Calu3 (cell line): ENCODE measurements at regions of chr12 and their contacts with region 1.

Region 1: DNA sequence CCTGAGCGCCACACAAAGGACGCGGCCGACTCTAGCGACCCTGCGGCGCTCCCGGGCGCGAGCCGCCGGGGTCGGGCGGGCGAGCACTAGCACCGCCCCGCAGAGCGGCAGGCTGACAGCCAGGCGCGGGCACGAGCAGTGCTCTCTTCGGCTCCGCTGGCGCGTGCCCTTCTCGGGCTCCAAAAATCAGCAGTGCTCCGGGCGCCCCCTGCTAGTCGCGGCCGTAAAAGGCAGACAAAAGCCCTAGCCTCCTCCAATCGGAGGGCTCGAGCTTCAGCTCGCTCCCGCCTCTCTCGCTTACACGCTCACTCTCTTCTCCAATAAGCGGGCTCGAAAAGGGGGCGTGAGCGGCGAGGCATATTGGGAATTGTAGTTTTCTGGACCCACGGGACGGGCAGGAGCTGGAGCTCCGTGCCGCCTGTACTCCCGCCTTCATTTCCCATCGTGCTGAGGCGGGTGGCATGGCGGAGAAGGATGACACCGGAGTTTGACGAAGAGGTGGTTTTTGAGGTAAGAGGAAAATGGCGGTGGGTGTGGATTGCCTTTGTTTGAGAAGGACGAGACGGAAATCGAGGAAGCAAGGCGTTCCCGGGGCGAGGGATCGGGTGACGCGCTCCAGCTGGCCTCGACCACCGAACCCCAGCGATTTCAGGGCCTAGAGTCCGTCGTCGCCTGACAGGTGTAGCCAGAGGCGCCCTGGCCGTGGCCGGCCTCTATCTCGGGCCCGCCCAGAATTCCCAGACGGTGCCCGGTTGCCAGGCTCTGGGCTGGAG is at the starts of genes FGD6 and VEZT:
- DNase-seq: peak; percentile 99
- H3K4me3 Mint-ChIP-seq: peak within 1 kb of the TSS; percentile 77
- H3K27ac Mint-ChIP-seq: peak within 1 kb of the TSS; percentile 88
- H3K4me1 Mint-ChIP-seq: peaks cover 8% of the 10 kb centered on the region
- H3K27me3 Mint-ChIP-seq: no peaks in the 10 kb centered on the region
- CTCF ChIP-seq: peak; percentile 63
- total RNA-seq, gene FGD6: 64.5 and 66.6 TPM in 2 replicates
- total RNA-seq, gene VEZT: 149 and 160 TPM in 2 replicates

Region 2: GRCh38 chr12:95169368-95169767 is 48.2 kb before region 1 on chr12:
- CTCF ChIA-PET with region 1: interaction called, 4 read pairs
- intact Hi-C with region 1: loop called (anchors 2 kb)
- DNase-seq: peak; percentile 80
- H3K4me3 Mint-ChIP-seq: peak overlapping the region; percentile 39
- H3K27ac Mint-ChIP-seq: peak overlapping the region; percentile 90
- H3K4me1 Mint-ChIP-seq: peaks cover 38% of the 10 kb centered on the region
- H3K27me3 Mint-ChIP-seq: no peaks in the 10 kb centered on the region
- CTCF ChIP-seq: no peak

Region 3: GRCh38 chr12:95204141-95204866 is 13.3 kb before region 1 on chr12:
- CTCF ChIA-PET with region 1: interaction called, 19 read pairs
- intact Hi-C with region 1: loop called (anchors 1 kb)
- DNase-seq: peak; percentile 94
- H3K4me3 Mint-ChIP-seq: peak overlapping the region; percentile 70
- H3K27ac Mint-ChIP-seq: peak overlapping the region; percentile 98
- H3K4me1 Mint-ChIP-seq: peaks cover 82% of the 10 kb centered on the region
- H3K27me3 Mint-ChIP-seq: no peaks in the 10 kb centered on the region
- CTCF ChIP-seq: no peak

Region 4: GRCh38 chr12:95318071-95318545 is 100.5 kb after region 1 on chr12:
- CTCF ChIA-PET with region 1: no interaction called
- intact Hi-C with region 1: loop called (anchors 5 kb)
- DNase-seq: peak; percentile 39
- H3K4me3 Mint-ChIP-seq: peak overlapping the region; percentile 35
- H3K27ac Mint-ChIP-seq: peak overlapping the region; percentile 97
- H3K4me1 Mint-ChIP-seq: peaks cover 72% of the 10 kb centered on the region
- H3K27me3 Mint-ChIP-seq: no peaks in the 10 kb centered on the region
- CTCF ChIP-seq: no peak

Region 5: DNA sequence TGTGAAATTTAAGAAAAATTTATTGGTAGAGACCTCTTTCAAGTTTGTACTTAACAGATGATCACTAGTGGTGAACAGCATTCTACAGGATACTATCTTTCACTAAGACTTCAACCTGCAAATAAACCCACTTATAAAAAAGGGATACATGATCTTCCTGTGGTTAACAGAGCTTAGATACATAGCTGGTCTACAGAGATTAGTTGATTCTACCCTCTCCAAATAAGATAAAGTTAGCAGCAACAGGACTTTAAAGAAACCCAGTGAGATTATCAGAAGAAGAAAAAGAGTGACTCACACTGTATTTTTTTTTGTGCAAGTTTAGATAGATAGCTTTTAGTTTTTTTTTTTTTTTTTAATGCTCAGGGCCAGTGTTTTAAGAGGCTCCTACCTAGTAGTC is 299.2 kb after region 1 on chr12:
- CTCF ChIA-PET with region 1: no interaction called
- intact Hi-C with region 1: no loop called
- DNase-seq: no peak
- H3K4me3 Mint-ChIP-seq: no peak overlapping the region
- H3K27ac Mint-ChIP-seq: no peak overlapping the region
- H3K4me1 Mint-ChIP-seq: peaks cover 9% of the 10 kb centered on the region
- H3K27me3 Mint-ChIP-seq: no peaks in the 10 kb centered on the region
- CTCF ChIP-seq: no peak